ENCODE measurements at regions of chr19 and their contacts with region 1.

Region 1: GRCh38 chr19:7349961-7350711 is 1.4 kb downstream of the ARHGEF18 start:
- DNase-seq: no peak
- H3K4me3 ChIP-seq: peak overlapping the region in 1 of 4 donors; percentile 25
- H3K27ac ChIP-seq: no peak overlapping the region
- H3K4me1 ChIP-seq: peaks cover 0 to 10% (median under 1%) of the 10 kb centered on the region in 4 donors
- H3K27me3 ChIP-seq: peaks cover 0 to 4% (median 0%) of the 10 kb centered on the region in 4 donors
- CTCF ChIP-seq: no peak
- EP300 ChIP-seq: no peak
- POLR2A ChIP-seq: no peak

Region 2: DNA sequence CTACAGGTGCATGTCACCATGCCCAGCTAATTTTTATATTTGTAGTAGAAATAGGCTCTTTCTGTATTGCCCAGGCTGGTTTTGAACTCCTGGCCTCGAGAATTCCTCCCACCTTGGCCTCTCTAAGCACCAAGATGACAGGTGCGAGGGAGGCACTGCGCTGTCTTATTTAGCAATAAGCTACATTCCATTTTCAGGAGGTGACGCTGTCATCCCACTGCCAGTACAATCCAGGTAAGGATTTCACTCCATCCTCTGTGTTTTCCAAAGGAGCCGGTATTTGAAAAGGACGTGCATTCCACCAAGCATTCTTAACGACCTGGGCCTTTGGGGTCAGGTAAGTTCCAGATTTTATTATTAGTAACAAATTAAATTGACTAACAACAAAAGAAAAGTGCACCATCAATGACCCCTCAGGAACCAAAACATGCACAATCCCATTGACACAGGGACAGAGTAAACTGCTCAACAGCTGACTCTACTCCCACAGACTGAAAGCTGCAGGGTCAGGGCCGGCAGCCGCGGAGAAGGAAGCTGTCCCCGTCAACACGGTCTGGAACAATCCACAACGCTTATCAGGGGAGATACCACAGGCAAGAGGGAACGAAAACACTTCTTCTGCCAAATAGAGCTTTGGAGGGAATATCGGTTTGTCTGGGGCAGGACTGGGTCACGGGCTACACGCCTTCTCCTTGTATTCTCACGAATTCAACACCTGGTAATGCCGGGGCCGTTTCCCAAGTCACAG is 138.8 kb before region 1 on chr19:
- intact Hi-C with region 1: no loop called
- DNase-seq: no peak
- H3K4me3 ChIP-seq: no peak overlapping the region
- H3K27ac ChIP-seq: peak overlapping the region; percentile 23 to 43 (median 30)
- H3K4me1 ChIP-seq: peaks cover 35 to 64% (median 43%) of the 10 kb centered on the region in 4 donors
- H3K27me3 ChIP-seq: no peaks in the 10 kb centered on the region
- CTCF ChIP-seq: no peak
- EP300 ChIP-seq: no peak
- POLR2A ChIP-seq: no peak

Region 3: GRCh38 chr19:7535035-7535992 is 185.2 kb after region 1 on chr19 and contains the start of gene PNPLA6:
- intact Hi-C with region 1: loop called (anchors 10 kb)
- DNase-seq: peak; percentile 99
- H3K4me3 ChIP-seq: peak within 1 kb of the TSS; percentile 78 to 91 (median 88)
- H3K27ac ChIP-seq: peak within 1 kb of the TSS; percentile 90 to 97 (median 94)
- H3K4me1 ChIP-seq: peaks cover 13 to 28% (median 25%) of the 10 kb centered on the region in 4 donors
- H3K27me3 ChIP-seq: no peaks in the 10 kb centered on the region
- CTCF ChIP-seq: peak in 1 of 3 experiments; percentile 21
- EP300 ChIP-seq: no peak
- POLR2A ChIP-seq: peak; percentile 58
- total RNA-seq, gene PNPLA6: 58.1 to 156 (median 85.7) TPM

Region 4: GRCh38 chr19:7680606-7681339 is 330.6 kb after region 1 on chr19 and contains the start of gene TRAPPC5:
- intact Hi-C with region 1: loop called (anchors 5 kb)
- DNase-seq: no peak
- H3K4me3 ChIP-seq: peak within 1 kb of the TSS; percentile 75 to 100 (median 88)
- H3K27ac ChIP-seq: peak within 1 kb of the TSS; percentile 78 to 90 (median 84)
- H3K4me1 ChIP-seq: peaks cover 10 to 29% (median 22%) of the 10 kb centered on the region in 4 donors
- H3K27me3 ChIP-seq: peaks cover 0 to 46% (median 3%) of the 10 kb centered on the region in 4 donors
- CTCF ChIP-seq: peak; percentile 99 to 100 (median 99)
- EP300 ChIP-seq: no peak
- POLR2A ChIP-seq: no peak
- total RNA-seq, gene TRAPPC5: 12.5 to 84.7 (median 64.8) TPM